ENCODE measurements at regions of chr16 and their contacts with region 1.

Region 1: GRCh38 chr16:23847948-23848347 is 12.2 kb downstream of the PRKCB start:
- DNase-seq: peak; percentile 62
- ATAC-seq: peak; percentile 68
- H3K4me3 ChIP-seq: peak overlapping the region in 1 of 5 experiments; percentile 5
- H3K4me3 Mint-ChIP-seq: peak overlapping the region; percentile 46
- H3K27ac ChIP-seq: peak overlapping the region in 1 of 2 donors; percentile 68
- H3K27ac Mint-ChIP-seq: peak overlapping the region; percentile 77
- H3K4me1 ChIP-seq: peaks cover 64 to 85% of the 10 kb centered on the region in 2 donors
- H3K4me1 Mint-ChIP-seq: peaks cover 85% of the 10 kb centered on the region
- H3K27me3 ChIP-seq: no peaks in the 10 kb centered on the region
- H3K27me3 Mint-ChIP-seq: no peaks in the 10 kb centered on the region
- CTCF ChIP-seq: no peak

Region 2: DNA sequence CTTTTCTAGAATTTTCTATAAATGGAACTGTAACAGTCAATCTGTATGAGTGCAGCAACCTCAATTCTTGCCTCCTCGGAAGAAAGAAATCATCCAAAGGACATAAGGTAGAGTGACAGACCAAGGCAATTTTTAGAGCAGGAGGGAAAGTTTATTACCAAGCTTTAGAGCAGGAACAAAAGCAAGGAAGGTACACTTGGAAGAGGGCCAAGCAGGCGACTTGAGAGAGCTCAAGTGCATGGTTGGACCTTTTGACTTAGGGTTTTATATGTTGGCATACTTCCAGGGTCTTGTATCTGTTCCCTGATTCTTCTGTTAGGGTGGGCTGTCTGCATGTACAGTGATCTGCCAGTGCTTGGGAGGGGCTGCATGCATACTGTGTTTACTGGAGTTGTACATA is 615.1 kb before region 1 on chr16:
- CTCF ChIA-PET with region 1: no interaction called
- POLR2A ChIA-PET with region 1: no interaction called
- intact Hi-C with region 1: no loop called
- DNase-seq: no peak
- ATAC-seq: no peak
- H3K4me3 ChIP-seq: no peak overlapping the region
- H3K4me3 Mint-ChIP-seq: no peak overlapping the region
- H3K27ac ChIP-seq: no peak overlapping the region
- H3K27ac Mint-ChIP-seq: no peak overlapping the region
- H3K4me1 ChIP-seq: no peaks in the 10 kb centered on the region
- H3K4me1 Mint-ChIP-seq: no peaks in the 10 kb centered on the region
- H3K27me3 ChIP-seq: peaks cover 0 to 3% (median 1%) of the 10 kb centered on the region in 4 experiments
- H3K27me3 Mint-ChIP-seq: peaks cover 17% of the 10 kb centered on the region
- CTCF ChIP-seq: no peak

Region 3: DNA sequence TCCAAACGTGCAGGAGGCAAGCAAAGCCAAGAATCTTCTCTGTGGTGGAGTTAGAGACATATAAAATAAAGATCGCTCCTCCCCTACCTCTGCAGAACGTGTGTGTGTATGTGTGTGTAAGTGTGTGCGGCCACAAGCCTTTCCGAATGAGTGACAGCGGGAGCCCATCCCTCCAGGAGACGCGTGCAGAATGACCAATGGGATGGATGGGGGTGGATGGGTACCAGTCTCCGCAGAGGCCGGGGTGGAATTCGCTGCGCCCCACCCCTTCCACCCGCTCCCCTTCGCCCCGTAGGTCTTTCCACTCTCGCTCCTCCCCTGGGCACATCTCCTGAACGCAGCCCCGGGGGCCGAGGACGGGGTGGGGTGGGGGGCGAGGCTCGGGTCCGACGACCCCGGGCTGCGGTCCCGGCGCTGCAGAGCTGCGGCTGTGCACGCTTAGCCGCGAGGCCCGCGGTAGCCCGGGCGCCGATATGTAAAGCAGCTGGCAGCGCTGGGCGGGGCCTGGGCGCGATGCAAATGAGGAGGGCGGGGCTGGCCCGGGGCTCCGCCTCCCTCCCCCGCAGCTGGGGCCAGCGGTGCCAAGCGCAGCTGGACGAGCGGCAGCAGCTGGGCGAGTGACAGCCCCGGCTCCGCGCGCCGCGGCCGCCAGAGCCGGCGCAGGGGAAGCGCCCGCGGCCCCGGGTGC is 12.4 kb before region 1 on chr16 and contains the start of gene PRKCB:
- CTCF ChIA-PET with region 1: no interaction called
- POLR2A ChIA-PET with region 1: interaction called, 4 read pairs
- intact Hi-C with region 1: loop called (anchors 1 kb)
- DNase-seq: peak; percentile 93
- ATAC-seq: peak; percentile 83
- H3K4me3 ChIP-seq: peak within 1 kb of the TSS; percentile 78 to 98 (median 88)
- H3K4me3 Mint-ChIP-seq: peak within 1 kb of the TSS; percentile 99
- H3K27ac ChIP-seq: peak within 1 kb of the TSS; percentile 7 to 56
- H3K27ac Mint-ChIP-seq: peak within 1 kb of the TSS; percentile 96
- H3K4me1 ChIP-seq: peaks cover 34 to 37% of the 10 kb centered on the region in 2 donors
- H3K4me1 Mint-ChIP-seq: peaks cover 48% of the 10 kb centered on the region
- H3K27me3 ChIP-seq: no peaks in the 10 kb centered on the region
- H3K27me3 Mint-ChIP-seq: no peaks in the 10 kb centered on the region
- CTCF ChIP-seq: no peak
- total RNA-seq, gene PRKCB: 373 and 397 TPM in 2 replicates

Region 4: DNA sequence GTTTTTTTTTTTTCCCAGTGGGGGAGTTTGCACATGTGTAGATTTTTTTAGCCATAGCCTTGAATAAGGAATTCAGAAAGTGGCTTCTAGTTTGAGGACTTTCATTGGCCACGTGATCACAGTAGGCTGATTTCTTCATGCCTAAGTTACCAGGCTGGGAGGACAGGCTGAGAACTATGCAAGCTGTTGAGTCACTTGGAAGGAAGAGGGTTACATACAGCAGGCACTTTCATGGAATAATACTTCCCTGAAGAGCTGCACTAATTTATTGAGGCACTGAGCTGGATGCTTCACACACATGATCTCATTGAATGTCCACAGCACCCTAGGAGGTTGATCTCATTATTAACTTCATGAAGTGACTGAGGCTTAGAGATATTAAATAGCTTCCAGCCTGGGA is 10.6 kb after region 1 on chr16:
- CTCF ChIA-PET with region 1: interaction called, 5 read pairs
- POLR2A ChIA-PET with region 1: interaction called, 4 read pairs
- intact Hi-C with region 1: loop called (anchors 1 kb)
- DNase-seq: no peak
- ATAC-seq: no peak
- H3K4me3 ChIP-seq: no peak overlapping the region
- H3K4me3 Mint-ChIP-seq: peak overlapping the region; percentile 54
- H3K27ac ChIP-seq: peak overlapping the region; percentile 26 to 86
- H3K27ac Mint-ChIP-seq: peak overlapping the region; percentile 80
- H3K4me1 ChIP-seq: peaks cover 96 to 97% of the 10 kb centered on the region in 2 donors
- H3K4me1 Mint-ChIP-seq: peaks cover 94% of the 10 kb centered on the region
- H3K27me3 ChIP-seq: no peaks in the 10 kb centered on the region
- H3K27me3 Mint-ChIP-seq: no peaks in the 10 kb centered on the region
- CTCF ChIP-seq: no peak